Ovary (tissue), 10 donors: ENCODE measurements at regions of chr4 and their contacts with region 1.

Region 1: GRCh38 chr4:2418650-2419571 is at the start of gene CFAP99:
- DNase-seq: peak; percentile 91 to 97 (median 95)
- H3K4me3 ChIP-seq: peak within 1 kb of the TSS; percentile 41
- H3K27ac ChIP-seq: no peak within 1 kb of the TSS
- H3K4me1 ChIP-seq: peaks cover 10% of the 10 kb centered on the region
- H3K27me3 ChIP-seq: peaks cover 3% of the 10 kb centered on the region
- CTCF ChIP-seq: no peak
- EP300 ChIP-seq: no peak
- POLR2A ChIP-seq: no peak
- total RNA-seq, gene CFAP99: 1.1 to 12.9 (median 1.4) TPM in 4 of 7 donors, not detected in the others

Region 2: DNA sequence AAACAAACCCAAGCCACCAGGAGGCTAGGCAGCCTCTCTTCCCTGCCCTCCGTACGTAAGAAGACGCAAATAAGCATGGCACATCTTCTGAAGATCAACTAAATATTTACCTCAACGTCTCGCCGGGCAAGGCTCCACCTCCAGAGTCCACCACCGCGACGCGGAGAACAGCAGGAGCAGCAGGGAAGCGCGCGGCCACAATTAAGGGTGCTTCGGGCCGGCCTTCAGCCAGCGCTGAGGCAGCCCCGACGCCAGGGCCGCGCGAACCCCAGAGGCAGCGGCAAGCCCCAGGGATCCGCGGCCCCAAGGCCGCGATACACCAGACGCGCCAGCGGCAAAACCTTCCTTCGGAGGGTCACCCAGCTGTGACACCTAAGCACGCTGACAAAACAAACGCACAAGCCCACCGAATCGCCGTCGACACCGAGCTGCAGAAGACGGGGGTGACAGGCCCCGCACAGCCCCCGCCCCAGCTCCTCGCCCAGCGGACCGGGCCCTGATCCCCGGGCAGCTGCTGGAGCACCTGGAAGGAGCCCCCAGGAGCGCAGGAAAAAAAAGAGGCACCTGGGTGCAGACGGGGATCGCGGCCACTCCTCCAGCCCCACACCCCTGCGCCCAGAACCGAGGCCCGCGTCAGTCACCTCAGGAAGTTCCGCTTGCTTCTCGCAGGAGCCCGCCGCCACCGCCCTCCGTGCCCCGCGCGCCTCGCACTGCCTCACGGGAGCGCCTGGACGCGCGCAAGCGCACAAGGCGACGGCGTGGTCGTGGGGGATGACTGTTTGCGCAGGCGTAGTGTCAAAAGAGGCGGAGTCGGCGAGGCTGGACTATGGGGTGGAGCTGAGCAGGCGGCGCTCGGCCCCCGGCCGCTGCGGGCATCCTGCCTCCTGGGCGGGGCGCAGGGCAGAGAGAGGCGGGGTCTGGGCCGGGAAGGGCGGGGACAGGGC is 177.2 kb before region 1 on chr4 and contains the starts of genes HAUS3 and POLN:
- intact Hi-C with region 1: loop called in 2 of 4 experiments (anchors 5 kb)
- DNase-seq: peak; percentile 99 to 100 (median 99)
- H3K4me3 ChIP-seq: peak within 1 kb of the TSS; percentile 85
- H3K27ac ChIP-seq: peak within 1 kb of the TSS in 1 of 2 donors; percentile 38
- H3K4me1 ChIP-seq: peaks cover 15% of the 10 kb centered on the region
- H3K27me3 ChIP-seq: no peaks in the 10 kb centered on the region
- CTCF ChIP-seq: no peak
- EP300 ChIP-seq: no peak
- POLR2A ChIP-seq: peak; percentile 56
- total RNA-seq, gene HAUS3: 9.3 to 17.4 (median 12.5) TPM
- total RNA-seq, gene POLN: 0.95 to 11.4 (median 3.4) TPM

Region 3: DNA sequence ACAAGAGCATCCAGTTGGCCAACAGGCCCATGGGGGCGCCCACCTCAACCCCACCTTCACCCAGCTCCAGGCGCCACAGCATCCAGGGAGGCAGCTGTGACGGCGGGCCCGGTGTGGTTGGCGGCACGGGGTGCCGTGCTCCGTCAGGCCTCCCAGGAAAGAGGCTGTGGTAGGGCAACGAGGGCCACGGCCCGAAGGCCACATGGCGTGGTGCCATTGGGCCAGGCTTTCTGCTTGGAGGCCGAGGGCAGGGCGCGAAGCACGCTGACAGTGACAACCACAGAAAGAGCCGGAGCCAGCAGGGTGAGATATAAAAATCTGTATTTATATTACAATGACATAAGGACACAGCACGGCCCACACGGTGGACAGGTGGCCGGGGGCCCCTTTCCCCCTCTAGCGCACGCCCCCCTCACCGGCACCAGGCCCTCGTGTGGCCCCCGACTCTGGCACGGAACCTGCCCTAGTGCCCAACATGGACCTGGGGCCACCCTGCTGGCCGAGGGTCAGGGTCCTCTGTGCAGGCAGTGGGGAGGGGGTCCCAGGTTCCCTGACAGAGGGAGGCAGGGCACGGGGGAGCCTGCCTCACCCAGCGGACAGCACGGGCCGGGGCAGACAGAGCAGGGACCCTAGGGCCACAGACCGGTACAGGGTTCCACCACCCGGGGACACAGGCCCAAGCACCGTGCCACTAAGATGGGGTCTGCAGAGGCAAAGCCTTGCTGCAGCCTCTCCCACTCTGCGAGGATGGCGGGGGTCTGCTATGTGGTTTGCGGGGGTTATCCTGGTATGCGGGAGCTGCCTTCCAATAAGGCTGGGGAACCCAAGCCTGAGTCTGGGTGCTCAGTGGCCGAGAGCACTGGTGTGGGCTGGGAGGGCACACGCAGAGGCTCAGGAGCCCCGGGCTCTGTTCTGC is 171.5 kb before region 1 on chr4:
- intact Hi-C with region 1: loop called in 2 of 4 experiments (anchors 5 kb)
- DNase-seq: peak in 4 of 5 donors; percentile 16 to 37 (median 32)
- H3K4me3 ChIP-seq: no peak overlapping the region
- H3K27ac ChIP-seq: no peak overlapping the region
- H3K4me1 ChIP-seq: peaks cover 13% of the 10 kb centered on the region
- H3K27me3 ChIP-seq: no peaks in the 10 kb centered on the region
- CTCF ChIP-seq: no peak
- EP300 ChIP-seq: no peak
- POLR2A ChIP-seq: no peak

Region 4: GRCh38 chr4:2255501-2256155 is 163.3 kb before region 1 on chr4:
- intact Hi-C with region 1: loop called in 2 of 4 experiments (anchors 5 to 10 kb)
- DNase-seq: peak; percentile 39 to 81 (median 71)
- H3K4me3 ChIP-seq: peak overlapping the region; percentile 26
- H3K27ac ChIP-seq: peak overlapping the region; percentile 58 to 71
- H3K4me1 ChIP-seq: peaks cover 21% of the 10 kb centered on the region
- H3K27me3 ChIP-seq: no peaks in the 10 kb centered on the region
- CTCF ChIP-seq: no peak
- EP300 ChIP-seq: no peak
- POLR2A ChIP-seq: no peak

Region 5: GRCh38 chr4:2262143-2262943 is 156.6 kb before region 1 on chr4:
- intact Hi-C with region 1: loop called in 2 of 4 experiments (anchors 5 to 10 kb)
- DNase-seq: peak; percentile 98 to 100 (median 99)
- H3K4me3 ChIP-seq: peak overlapping the region; percentile 43
- H3K27ac ChIP-seq: peak overlapping the region; percentile 61 to 97
- H3K4me1 ChIP-seq: peaks cover 12% of the 10 kb centered on the region
- H3K27me3 ChIP-seq: no peaks in the 10 kb centered on the region
- CTCF ChIP-seq: no peak
- EP300 ChIP-seq: no peak
- POLR2A ChIP-seq: peak; percentile 88